ENCODE measurements at regions of chr11 and their contacts with region 1.

Region 1: DNA sequence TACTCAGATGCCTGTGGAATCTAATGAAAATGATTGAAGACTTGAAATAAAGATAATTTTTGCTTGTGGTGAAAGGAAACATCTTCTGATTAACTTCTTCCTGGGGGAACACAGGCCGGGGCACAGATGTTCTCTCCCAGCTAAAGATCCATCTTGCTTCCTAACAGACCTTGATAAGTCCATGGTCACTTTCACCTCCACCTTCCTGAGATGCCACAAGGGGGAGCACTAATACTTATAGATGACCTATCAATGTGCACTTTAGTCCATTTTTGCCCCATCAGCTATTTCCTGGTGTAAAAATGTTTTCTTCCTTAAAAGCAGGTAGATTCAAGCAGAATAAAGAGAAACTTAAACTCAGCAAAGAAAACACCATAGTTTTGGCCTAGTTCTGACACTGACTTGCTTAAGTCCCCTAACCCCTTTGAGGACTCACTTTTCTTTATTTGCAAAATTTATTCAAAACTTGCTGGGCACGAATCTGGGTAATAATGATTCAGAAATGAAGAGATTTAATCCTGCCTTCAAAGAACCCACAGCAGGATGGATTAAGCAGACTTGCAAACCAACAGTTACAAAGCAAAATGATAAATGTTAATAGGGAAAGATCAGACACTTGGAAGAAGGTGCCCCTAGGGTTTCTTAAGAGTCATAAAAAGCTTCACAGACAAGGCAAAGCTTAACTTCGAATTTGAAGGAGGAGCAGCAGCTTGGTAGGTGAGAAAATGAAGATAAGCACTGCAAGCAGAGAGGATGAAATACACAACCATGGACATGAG is 158.7 kb downstream of the RAB38 start:
- DNase-seq: peak; percentile 34

Region 2: DNA sequence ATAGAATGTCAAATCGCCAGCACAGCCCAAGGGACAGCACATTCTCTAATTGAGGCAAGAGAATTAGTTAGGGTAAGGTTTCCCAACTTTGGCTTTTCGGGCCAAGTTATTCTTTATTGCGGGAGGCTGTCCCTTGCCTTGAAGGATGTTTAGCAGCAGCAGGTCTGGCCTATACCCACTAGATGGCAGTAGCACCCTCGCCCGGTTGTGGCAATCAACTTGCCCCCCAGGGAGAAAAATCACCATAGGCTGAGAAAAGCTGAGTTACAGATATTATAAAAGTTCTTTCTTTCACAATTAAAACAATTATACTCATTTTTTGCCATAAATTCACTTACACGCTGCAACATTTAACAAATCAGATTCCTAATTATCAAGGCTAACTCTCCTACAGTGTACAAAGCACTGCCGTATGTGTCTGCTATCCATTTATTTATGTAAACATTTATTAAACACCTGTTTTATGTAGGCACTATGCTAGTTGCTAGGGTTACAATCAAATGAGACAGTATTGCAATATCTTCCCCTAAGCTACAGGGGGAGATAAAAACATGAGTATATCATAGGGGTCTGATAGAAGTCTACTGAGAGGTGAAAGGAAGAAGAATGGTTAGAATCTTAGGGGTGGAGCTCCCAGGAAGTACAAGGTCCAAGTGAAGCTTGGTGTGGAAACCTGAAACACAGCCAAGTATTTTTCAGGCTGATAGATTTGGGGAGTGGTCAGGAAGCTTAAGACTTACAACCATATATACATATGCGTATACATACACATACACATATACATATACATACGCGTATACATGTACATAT is 293.6 kb before region 1 on chr11:
- CTCF ChIA-PET with region 1: no interaction called
- POLR2A ChIA-PET with region 1: no interaction called
- DNase-seq: peak; percentile 45

Region 3: GRCh38 chr11:88042238-88042637 is 25.7 kb after region 1 on chr11:
- CTCF ChIA-PET with region 1: no interaction called
- POLR2A ChIA-PET with region 1: no interaction called
- DNase-seq: no peak

Region 4: GRCh38 chr11:88552377-88553062 is 535.9 kb after region 1 on chr11:
- CTCF ChIA-PET with region 1: interaction called, 11 read pairs
- POLR2A ChIA-PET with region 1: no interaction called
- DNase-seq: peak; percentile 65